Heart left ventricle (tissue), 16 donors: ENCODE measurements at regions of chr15 and their contacts with region 1.

Region 1: DNA sequence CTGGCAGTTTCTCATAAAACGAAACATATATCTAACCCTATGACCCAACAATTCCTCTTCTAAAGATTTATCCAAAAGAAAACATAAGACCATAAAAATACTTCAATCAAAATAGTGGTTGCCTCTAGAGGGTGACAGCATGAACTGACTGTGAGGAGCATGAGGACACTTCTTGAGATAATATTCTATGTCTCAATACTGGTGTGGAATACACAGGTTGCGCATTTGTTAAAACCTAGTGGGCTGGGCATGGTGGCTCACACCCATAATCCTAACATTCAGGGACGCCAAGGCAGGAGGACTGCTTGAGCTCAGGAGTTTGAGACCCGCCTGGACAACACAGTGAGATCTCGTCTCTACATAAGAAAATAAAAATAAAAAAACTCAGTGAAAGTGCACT is 57.3 kb downstream of the HERC1 start:
- DNase-seq: no peak
- ATAC-seq: no peak
- H3K4me3 ChIP-seq: no peak overlapping the region
- H3K27ac ChIP-seq: no peak overlapping the region
- H3K4me1 ChIP-seq: peaks cover 0 to 28% (median 12%) of the 10 kb centered on the region in 12 donors
- H3K27me3 ChIP-seq: no peaks in the 10 kb centered on the region
- CTCF ChIP-seq: no peak
- POLR2A ChIP-seq: no peak

Region 2: GRCh38 chr15:63811942-63812550 is 35.6 kb after region 1 on chr15:
- intact Hi-C with region 1: loop called in 1 of 10 experiments (anchors 5 kb)
- DNase-seq: no peak
- ATAC-seq: no peak
- H3K4me3 ChIP-seq: no peak overlapping the region
- H3K27ac ChIP-seq: no peak overlapping the region
- H3K4me1 ChIP-seq: peaks cover 0 to 71% (median 41%) of the 10 kb centered on the region in 12 donors
- H3K27me3 ChIP-seq: no peaks in the 10 kb centered on the region
- CTCF ChIP-seq: no peak
- POLR2A ChIP-seq: no peak

Region 3: DNA sequence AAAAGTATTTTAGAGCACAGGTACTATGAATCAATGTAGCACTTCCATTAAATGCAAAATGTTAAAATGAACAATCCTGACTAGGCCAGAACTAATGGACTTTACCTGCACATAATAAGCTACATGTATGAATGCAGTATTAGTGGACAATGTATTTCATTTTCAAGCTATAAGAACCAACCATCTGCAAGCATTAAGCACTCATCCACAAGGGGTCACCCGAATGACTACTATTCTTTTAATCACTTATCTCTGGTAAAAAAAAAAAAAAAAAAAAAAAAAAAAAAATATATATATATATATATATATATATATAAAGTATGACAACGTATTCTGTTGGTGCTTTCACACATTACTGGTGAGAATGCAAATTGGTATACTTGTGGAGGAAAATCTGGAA is 50.1 kb after region 1 on chr15:
- intact Hi-C with region 1: no loop called
- DNase-seq: no peak
- ATAC-seq: no peak
- H3K4me3 ChIP-seq: no peak overlapping the region
- H3K27ac ChIP-seq: no peak overlapping the region
- H3K4me1 ChIP-seq: peaks cover 0 to 55% (median 35%) of the 10 kb centered on the region in 12 donors
- H3K27me3 ChIP-seq: no peaks in the 10 kb centered on the region
- CTCF ChIP-seq: peak in 5 of 12 donors; percentile 15 to 31 (median 19)
- POLR2A ChIP-seq: no peak